Activated T-helper 1 cell treated with anti-CD3 and anti-CD28 coated beads, Interleukin-12 subunit alpha, Interleukin-12 subunit beta, Interleukin-2, Interleukin-4 antibody, amounts not matched to agents 30 ng/mL and 10 ng/mL and 1 ng/mL, durations not matched to agents 14 hours and 24 hours and 36 hours (primary cell): ENCODE measurements at regions of chr6 and their contacts with region 1.

Region 1: GRCh38 chr6:145784683-145785082 is 29.9 kb downstream of the FBXO30 start:
- DNase-seq: no peak
- H3K4me3 Mint-ChIP-seq: no peak overlapping the region
- H3K27ac Mint-ChIP-seq: no peak overlapping the region
- H3K4me1 Mint-ChIP-seq: no peaks in the 10 kb centered on the region
- H3K27me3 Mint-ChIP-seq: no peaks in the 10 kb centered on the region

Region 2: GRCh38 chr6:145761584-145761983 is 23.1 kb before region 1 on chr6:
- intact Hi-C with region 1: loop called (anchors 1 kb)
- DNase-seq: no peak
- H3K4me3 Mint-ChIP-seq: no peak overlapping the region
- H3K27ac Mint-ChIP-seq: no peak overlapping the region
- H3K4me1 Mint-ChIP-seq: no peaks in the 10 kb centered on the region
- H3K27me3 Mint-ChIP-seq: no peaks in the 10 kb centered on the region